Naive thymus-derived CD4-positive, alpha-beta T cell (primary cell): ENCODE measurements at regions of chr17 and their contacts with region 1.

Region 1: GRCh38 chr17:4833178-4833940 is at the start of gene MINK1:
- DNase-seq: peak; percentile 80 to 89 (median 85)
- ATAC-seq: peak; percentile 96
- H3K4me3 ChIP-seq: peak within 1 kb of the TSS; percentile 87
- H3K4me3 Mint-ChIP-seq: peak within 1 kb of the TSS; percentile 89 to 99 (median 96)
- H3K27ac ChIP-seq: peak within 1 kb of the TSS; percentile 85
- H3K27ac Mint-ChIP-seq: peak within 1 kb of the TSS; percentile 82 to 97 (median 92)
- H3K4me1 ChIP-seq: peaks cover 14 to 27% of the 10 kb centered on the region in 2 donors
- H3K4me1 Mint-ChIP-seq: peaks cover 34 to 42% (median 38%) of the 10 kb centered on the region in 7 donors
- H3K27me3 ChIP-seq: no peaks in the 10 kb centered on the region
- H3K27me3 Mint-ChIP-seq: peaks cover 0 to 5% (median 0%) of the 10 kb centered on the region in 5 donors
- total RNA-seq, gene MINK1: 88.8 to 142 (median 125) TPM

Region 2: DNA sequence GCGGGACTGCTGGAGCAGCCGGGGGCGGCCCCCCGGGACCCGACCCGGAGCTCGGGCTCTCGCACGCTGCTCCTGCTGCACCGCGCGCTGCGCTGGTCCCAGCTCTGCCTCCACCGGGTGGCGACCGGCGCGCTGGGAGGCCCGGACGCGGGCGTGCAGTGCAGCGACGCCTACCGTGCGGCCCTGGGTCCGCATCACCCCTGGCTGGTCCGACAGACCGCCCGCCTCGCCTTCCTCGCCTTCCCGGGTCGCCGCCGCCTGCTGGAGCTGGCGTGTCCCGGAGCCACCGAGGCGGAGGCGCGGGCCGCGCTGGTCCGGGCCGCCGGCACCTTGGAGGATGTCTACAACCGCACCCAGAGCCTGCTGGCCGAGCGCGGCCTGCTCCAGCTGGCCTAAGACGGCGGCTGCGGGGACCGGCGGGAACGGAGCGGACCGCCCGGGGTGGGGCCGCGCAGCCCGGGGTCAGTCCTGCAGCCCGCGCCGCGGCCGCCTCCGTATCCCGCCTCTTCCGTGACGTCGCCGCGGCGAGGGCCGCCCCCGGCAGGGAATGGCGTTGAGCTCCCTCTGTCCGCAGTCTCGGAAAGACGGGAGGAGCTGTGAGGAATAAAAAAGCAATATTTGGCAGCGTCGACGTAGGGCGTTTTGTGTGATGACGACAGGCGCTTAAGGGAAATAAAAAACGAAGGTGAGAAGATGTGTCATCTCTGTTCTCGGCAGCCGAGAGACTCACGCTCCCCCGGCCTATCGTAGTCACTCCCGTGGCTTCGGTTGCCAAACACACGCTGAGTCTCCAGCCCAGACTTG is 43.3 kb before region 1 on chr17:
- CTCF ChIA-PET with region 1: interaction called, 3 read pairs
- POLR2A ChIA-PET with region 1: no interaction called
- intact Hi-C with region 1: loop called in 1 of 2 experiments (anchors 1 kb)
- DNase-seq: peak; percentile 66 to 87 (median 78)
- ATAC-seq: peak; percentile 93
- H3K4me3 ChIP-seq: peak overlapping the region; percentile 75
- H3K4me3 Mint-ChIP-seq: peak overlapping the region; percentile 67 to 94 (median 88)
- H3K27ac ChIP-seq: peak overlapping the region; percentile 73
- H3K27ac Mint-ChIP-seq: peak overlapping the region; percentile 1 to 93 (median 89)
- H3K4me1 ChIP-seq: peaks cover 15 to 20% of the 10 kb centered on the region in 2 donors
- H3K4me1 Mint-ChIP-seq: peaks cover 11 to 34% (median 19%) of the 10 kb centered on the region in 7 donors
- H3K27me3 ChIP-seq: peaks cover 0 to 11% of the 10 kb centered on the region in 2 donors
- H3K27me3 Mint-ChIP-seq: peaks cover 23 to 49% (median 31%) of the 10 kb centered on the region in 5 donors

Region 3: GRCh38 chr17:4796553-4796921 is 36.8 kb before region 1 on chr17:
- CTCF ChIA-PET with region 1: no interaction called
- POLR2A ChIA-PET with region 1: interaction called, 4 read pairs
- intact Hi-C with region 1: loop called (anchors 1 kb)
- DNase-seq: peak in 1 of 9 donors; percentile 43
- ATAC-seq: no peak
- H3K4me3 ChIP-seq: peak overlapping the region; percentile 76
- H3K4me3 Mint-ChIP-seq: peak overlapping the region; percentile 96 to 100 (median 99)
- H3K27ac ChIP-seq: peak overlapping the region; percentile 84
- H3K27ac Mint-ChIP-seq: peak overlapping the region; percentile 90 to 99 (median 96)
- H3K4me1 ChIP-seq: peaks cover 7% of the 10 kb centered on the region in 2 donors
- H3K4me1 Mint-ChIP-seq: peaks cover 12 to 14% (median 13%) of the 10 kb centered on the region in 7 donors
- H3K27me3 ChIP-seq: no peaks in the 10 kb centered on the region
- H3K27me3 Mint-ChIP-seq: peaks cover 0 to 6% (median 0%) of the 10 kb centered on the region in 5 donors

Region 4: GRCh38 chr17:4806777-4807604 is 26.4 kb before region 1 on chr17 and contains the start of gene PLD2:
- CTCF ChIA-PET with region 1: no interaction called
- POLR2A ChIA-PET with region 1: no interaction called
- intact Hi-C with region 1: loop called (anchors 1 kb)
- DNase-seq: peak; percentile 71 to 95 (median 80)
- ATAC-seq: peak; percentile 100
- H3K4me3 ChIP-seq: peak within 1 kb of the TSS; percentile 47
- H3K4me3 Mint-ChIP-seq: peak within 1 kb of the TSS; percentile 71 to 88 (median 80)
- H3K27ac ChIP-seq: peak within 1 kb of the TSS; percentile 79
- H3K27ac Mint-ChIP-seq: peak within 1 kb of the TSS in 7 of 9 donors; percentile 48 to 78 (median 62)
- H3K4me1 ChIP-seq: peaks cover 0 to 5% of the 10 kb centered on the region in 2 donors
- H3K4me1 Mint-ChIP-seq: peaks cover 7 to 23% (median 19%) of the 10 kb centered on the region in 7 donors
- H3K27me3 ChIP-seq: no peaks in the 10 kb centered on the region
- H3K27me3 Mint-ChIP-seq: peaks cover 0 to 7% (median 0%) of the 10 kb centered on the region in 5 donors
- total RNA-seq, gene PLD2: 22.9 to 42.7 (median 26.8) TPM

Region 5: GRCh38 chr17:4881761-4882555 is 48.6 kb after region 1 on chr17:
- CTCF ChIA-PET with region 1: interaction called, 4 read pairs
- POLR2A ChIA-PET with region 1: no interaction called
- intact Hi-C with region 1: loop called (anchors 5 to 10 kb)
- DNase-seq: peak; percentile 51 to 73 (median 61)
- ATAC-seq: peak; percentile 90
- H3K4me3 ChIP-seq: no peak overlapping the region
- H3K4me3 Mint-ChIP-seq: no peak overlapping the region
- H3K27ac ChIP-seq: no peak overlapping the region
- H3K27ac Mint-ChIP-seq: no peak overlapping the region
- H3K4me1 ChIP-seq: no peaks in the 10 kb centered on the region
- H3K4me1 Mint-ChIP-seq: peaks cover 0 to 4% (median 0%) of the 10 kb centered on the region in 7 donors
- H3K27me3 ChIP-seq: no peaks in the 10 kb centered on the region
- H3K27me3 Mint-ChIP-seq: no peaks in the 10 kb centered on the region

Region 6: DNA sequence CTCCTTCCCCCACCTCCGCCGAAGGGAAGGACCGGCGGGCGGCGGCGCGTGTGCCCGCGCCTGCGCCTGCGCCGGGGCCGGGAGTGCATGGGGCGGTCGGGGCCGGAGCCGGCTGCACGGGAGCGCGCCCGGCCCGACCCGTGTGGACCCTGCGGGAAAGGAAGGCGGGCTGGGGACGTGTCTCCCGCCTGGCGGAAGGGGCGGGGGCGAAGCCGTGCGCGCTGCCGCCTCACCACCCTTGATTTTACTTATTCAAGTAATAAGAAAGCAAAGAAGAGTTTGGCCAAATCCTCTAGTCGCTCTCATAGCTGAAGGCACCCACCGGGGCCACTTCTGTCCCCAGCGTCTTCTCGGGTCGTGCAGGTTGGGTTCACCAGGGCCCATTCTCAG is 115.6 kb after region 1 on chr17:
- CTCF ChIA-PET with region 1: no interaction called
- POLR2A ChIA-PET with region 1: no interaction called
- intact Hi-C with region 1: loop called (anchors 2 to 5 kb)
- DNase-seq: peak in 7 of 9 donors; percentile 69 to 84 (median 79)
- ATAC-seq: peak; percentile 58
- H3K4me3 ChIP-seq: peak overlapping the region; percentile 98
- H3K4me3 Mint-ChIP-seq: peak overlapping the region; percentile 92 to 100 (median 98)
- H3K27ac ChIP-seq: peak overlapping the region; percentile 89
- H3K27ac Mint-ChIP-seq: peak overlapping the region; percentile 83 to 100 (median 96)
- H3K4me1 ChIP-seq: peaks cover 27 to 35% of the 10 kb centered on the region in 2 donors
- H3K4me1 Mint-ChIP-seq: peaks cover 37 to 50% (median 43%) of the 10 kb centered on the region in 7 donors
- H3K27me3 ChIP-seq: no peaks in the 10 kb centered on the region
- H3K27me3 Mint-ChIP-seq: peaks cover 0 to 2% (median 0%) of the 10 kb centered on the region in 5 donors